ENCODE measurements at regions of chr11 and their contacts with region 1.

Region 1: GRCh38 chr11:6531267-6531752 is 34.2 kb downstream of the DNHD1 start:
- DNase-seq: peak; percentile 56
- H3K4me3 Mint-ChIP-seq: no peak overlapping the region
- H3K27ac Mint-ChIP-seq: no peak overlapping the region
- H3K4me1 Mint-ChIP-seq: no peaks in the 10 kb centered on the region
- H3K27me3 Mint-ChIP-seq: no peaks in the 10 kb centered on the region
- CTCF ChIP-seq: peak; percentile 74

Region 2: DNA sequence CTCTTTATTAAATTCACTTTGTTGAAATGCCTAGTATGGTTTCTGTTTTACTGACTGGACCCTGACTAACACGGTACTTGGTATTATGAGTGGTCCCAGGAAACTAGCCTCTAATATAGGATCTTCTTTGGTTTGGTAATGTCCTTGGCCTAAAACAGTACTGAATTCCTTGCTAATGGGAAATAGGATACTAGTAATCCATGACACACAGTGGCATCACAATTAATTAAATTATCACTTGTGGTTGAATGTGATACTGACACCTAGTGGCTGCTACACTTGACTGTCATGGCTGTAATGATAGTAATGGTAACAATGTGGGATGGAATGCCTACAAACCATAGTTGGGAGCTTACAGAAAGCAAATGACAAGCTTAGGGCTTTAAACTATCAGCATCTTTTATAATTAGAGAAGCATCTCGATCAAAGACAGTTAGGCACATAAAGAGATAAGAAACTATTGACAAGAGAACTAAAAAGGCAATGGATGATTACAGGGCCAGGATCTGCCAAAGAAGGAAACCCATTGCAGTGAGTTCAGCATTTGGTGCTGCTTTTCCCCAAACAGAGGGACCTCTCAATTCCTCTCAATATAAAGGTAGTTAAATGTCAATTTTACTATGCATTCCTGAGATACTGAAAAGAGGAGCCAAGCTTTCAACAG is 25.6 kb before region 1 on chr11:
- CTCF ChIA-PET with region 1: interaction called, 31 read pairs
- POLR2A ChIA-PET with region 1: no interaction called
- intact Hi-C with region 1: no loop called
- DNase-seq: peak; percentile 64
- H3K4me3 Mint-ChIP-seq: no peak overlapping the region
- H3K27ac Mint-ChIP-seq: no peak overlapping the region
- H3K4me1 Mint-ChIP-seq: no peaks in the 10 kb centered on the region
- H3K27me3 Mint-ChIP-seq: no peaks in the 10 kb centered on the region
- CTCF ChIP-seq: peak; percentile 52

Region 3: GRCh38 chr11:6568191-6568918 is 37.0 kb after region 1 on chr11:
- CTCF ChIA-PET with region 1: interaction called, 15 read pairs
- POLR2A ChIA-PET with region 1: no interaction called
- intact Hi-C with region 1: no loop called
- DNase-seq: peak; percentile 76
- H3K4me3 Mint-ChIP-seq: no peak overlapping the region
- H3K27ac Mint-ChIP-seq: no peak overlapping the region
- H3K4me1 Mint-ChIP-seq: peaks cover 31% of the 10 kb centered on the region
- H3K27me3 Mint-ChIP-seq: no peaks in the 10 kb centered on the region
- CTCF ChIP-seq: no peak

Region 4: DNA sequence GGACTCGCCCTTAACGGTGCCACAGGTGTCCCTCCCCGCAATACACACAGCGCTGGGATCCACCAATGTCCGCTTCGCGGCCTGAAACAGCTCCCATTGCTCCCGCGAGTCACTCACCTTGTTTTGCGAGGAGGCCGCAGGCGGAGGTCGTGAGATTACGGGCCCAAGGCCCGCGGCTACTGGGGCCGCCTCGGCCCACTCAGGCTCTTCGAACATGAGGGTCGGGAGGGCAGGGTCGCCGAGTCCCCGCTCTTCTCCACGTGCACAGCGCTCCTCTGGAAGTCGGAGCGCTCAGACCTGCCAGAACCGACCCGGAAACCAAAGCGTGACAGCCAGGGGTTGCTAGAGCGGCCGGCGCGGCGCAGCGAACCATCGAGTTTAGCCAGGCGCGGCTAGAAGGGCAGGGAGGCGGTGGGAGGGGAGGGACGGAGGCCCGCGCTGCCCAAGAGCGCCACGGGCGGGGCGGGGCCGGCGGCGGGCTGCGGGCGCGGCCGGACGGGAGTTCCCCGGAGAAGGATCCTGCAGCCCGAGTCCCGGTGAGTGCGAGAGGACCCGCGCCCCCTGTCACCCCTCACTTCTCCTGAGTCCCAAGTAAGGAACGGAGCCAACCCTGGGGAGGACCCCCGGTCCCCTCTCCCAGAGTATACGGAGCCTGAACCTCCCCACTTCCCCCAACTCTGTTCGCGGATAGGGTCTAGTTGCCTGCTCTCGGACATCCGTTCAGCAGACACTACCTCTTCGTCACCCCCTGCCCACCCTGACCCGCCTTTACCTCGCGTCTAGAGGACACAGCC is 72.2 kb after region 1 on chr11 and contains the starts of genes ILK and RRP8:
- CTCF ChIA-PET with region 1: interaction called, 6 read pairs
- POLR2A ChIA-PET with region 1: interaction called, 6 read pairs
- intact Hi-C with region 1: loop called (anchors 2 kb)
- DNase-seq: peak; percentile 90
- H3K4me3 Mint-ChIP-seq: no peak within 1 kb of the TSS
- H3K27ac Mint-ChIP-seq: no peak within 1 kb of the TSS
- H3K4me1 Mint-ChIP-seq: peaks cover 22% of the 10 kb centered on the region
- H3K27me3 Mint-ChIP-seq: no peaks in the 10 kb centered on the region
- CTCF ChIP-seq: no peak
- total RNA-seq, gene ILK: 78.9 and 92.3 TPM in 2 replicates
- total RNA-seq, gene RRP8: 23.4 and 27.6 TPM in 2 replicates

Region 5: GRCh38 chr11:6682936-6683861 is 151.9 kb after region 1 on chr11 and contains the start of gene MRPL17:
- CTCF ChIA-PET with region 1: interaction called, 43 read pairs
- POLR2A ChIA-PET with region 1: interaction called, 6 read pairs
- intact Hi-C with region 1: loop called (anchors 1 kb)
- DNase-seq: peak; percentile 99
- H3K4me3 Mint-ChIP-seq: peak within 1 kb of the TSS; percentile 100
- H3K27ac Mint-ChIP-seq: peak within 1 kb of the TSS; percentile 95
- H3K4me1 Mint-ChIP-seq: peaks cover 12% of the 10 kb centered on the region
- H3K27me3 Mint-ChIP-seq: no peaks in the 10 kb centered on the region
- CTCF ChIP-seq: peak; percentile 75
- total RNA-seq, gene MRPL17: 78.0 and 88.4 TPM in 2 replicates

Region 6: DNA sequence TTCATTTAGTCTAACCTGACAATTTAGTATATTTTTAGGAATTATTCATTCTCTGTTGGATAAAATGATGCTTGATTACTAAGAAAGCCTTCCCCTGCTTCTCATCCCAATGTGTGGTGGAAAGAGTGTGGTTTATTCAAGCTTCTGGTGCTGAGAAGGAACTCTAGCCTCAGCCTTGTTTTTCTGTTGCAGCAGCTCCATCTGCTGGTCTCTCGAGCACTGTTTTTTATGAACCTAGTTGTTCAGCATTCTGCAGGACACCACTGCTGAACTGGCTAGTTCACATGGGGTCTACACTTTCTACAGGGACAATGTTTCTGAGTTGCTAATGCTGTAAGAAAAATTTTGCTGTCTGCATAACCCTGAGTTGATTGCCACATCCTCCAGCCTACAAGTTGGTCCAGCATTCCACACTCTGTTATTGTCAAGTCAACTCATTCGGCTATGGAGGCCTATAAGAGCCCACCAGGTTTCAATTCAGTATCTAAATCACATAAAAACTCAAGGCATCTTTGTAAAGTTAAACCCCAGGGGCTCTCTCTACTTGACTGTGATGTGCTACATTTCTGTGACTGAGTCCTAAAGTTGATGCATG is 226.2 kb after region 1 on chr11:
- CTCF ChIA-PET with region 1: interaction called, 4 read pairs
- POLR2A ChIA-PET with region 1: no interaction called
- intact Hi-C with region 1: loop called (anchors 5 kb)
- DNase-seq: peak; percentile 55
- H3K4me3 Mint-ChIP-seq: no peak overlapping the region
- H3K27ac Mint-ChIP-seq: no peak overlapping the region
- H3K4me1 Mint-ChIP-seq: no peaks in the 10 kb centered on the region
- H3K27me3 Mint-ChIP-seq: no peaks in the 10 kb centered on the region
- CTCF ChIP-seq: peak; percentile 49

Measured in MCF 10A (cell line).